T-cell (primary cell): ENCODE measurements at regions of chr3 and their contacts with region 1.

Region 1: DNA sequence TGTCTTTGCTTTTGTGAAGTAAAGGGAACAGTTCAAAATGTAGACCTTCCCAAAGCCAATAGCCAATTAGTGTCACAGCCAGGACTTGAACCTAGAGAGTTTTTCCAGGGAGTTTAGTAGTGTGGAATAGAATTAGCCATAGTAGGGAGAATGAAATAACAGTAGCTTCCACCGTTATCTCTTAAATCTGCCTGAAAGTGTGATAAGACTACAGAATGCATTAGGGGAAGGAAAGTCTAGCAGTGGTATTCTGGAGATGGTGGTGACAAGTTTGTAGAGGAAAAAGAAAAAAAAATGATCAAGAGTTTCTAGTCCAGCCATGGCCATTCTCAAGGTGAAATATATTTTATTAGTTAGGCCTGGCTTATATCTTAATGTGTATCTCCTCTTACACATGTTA is 13.8 kb downstream of the ATP11B start:
- DNase-seq: no peak
- ATAC-seq: no peak
- H3K4me3 ChIP-seq: no peak overlapping the region
- H3K4me3 Mint-ChIP-seq: peak overlapping the region in 1 of 3 donors; percentile 30
- H3K27ac ChIP-seq: no peak overlapping the region
- H3K27ac Mint-ChIP-seq: no peak overlapping the region
- H3K4me1 ChIP-seq: peaks cover 11 to 14% of the 10 kb centered on the region in 2 experiments
- H3K4me1 Mint-ChIP-seq: peaks cover 80 to 92% (median 84%) of the 10 kb centered on the region in 3 donors
- H3K27me3 ChIP-seq: no peaks in the 10 kb centered on the region
- H3K27me3 Mint-ChIP-seq: no peaks in the 10 kb centered on the region

Region 2: DNA sequence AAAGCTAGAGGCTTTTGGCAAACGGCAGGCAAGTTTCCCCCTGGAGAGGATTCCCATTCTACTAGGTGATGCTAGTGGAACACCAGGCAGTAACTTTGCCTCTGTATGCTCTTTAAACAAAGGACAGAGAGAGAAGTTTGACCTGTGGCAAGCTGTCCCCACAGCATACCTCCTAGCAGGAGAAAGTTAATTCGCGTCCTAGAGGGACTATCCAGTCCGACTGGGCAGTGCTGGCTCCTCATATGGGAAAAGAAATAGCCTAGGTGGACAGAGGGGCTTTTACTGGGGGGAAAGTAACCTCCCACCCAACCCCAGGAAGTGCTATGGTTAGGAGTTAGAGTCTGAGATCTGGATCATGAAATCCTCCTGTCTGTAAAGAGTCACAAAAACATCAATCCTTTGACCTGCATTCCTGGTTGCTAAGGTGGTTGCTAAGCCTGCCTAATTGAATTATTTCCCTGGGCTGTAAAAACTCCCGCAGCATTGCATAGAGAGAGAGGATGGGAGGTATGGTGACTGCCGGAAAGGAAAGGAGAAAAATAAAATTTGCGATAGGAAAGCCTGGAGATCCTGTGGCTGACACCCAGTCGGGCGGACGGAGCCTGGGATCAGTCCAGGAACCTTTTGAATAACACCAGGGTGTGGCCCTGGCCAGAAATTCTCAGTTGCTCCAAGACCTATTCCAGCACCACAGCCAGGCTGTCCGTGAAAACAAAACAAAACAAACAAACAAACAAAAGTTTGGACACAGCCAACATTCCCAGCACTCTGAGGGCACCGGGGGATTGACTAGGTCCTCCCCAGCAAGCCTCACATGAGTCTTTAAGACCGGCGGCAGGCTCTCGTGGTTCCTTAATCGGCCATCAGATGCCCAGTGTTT is 81.4 kb before region 1 on chr3:
- CTCF ChIA-PET with region 1: no interaction called
- POLR2A ChIA-PET with region 1: no interaction called
- DNase-seq: peak in 1 of 35 experiments; percentile 9
- ATAC-seq: no peak
- H3K4me3 ChIP-seq: no peak overlapping the region
- H3K4me3 Mint-ChIP-seq: no peak overlapping the region
- H3K27ac ChIP-seq: no peak overlapping the region
- H3K27ac Mint-ChIP-seq: no peak overlapping the region
- H3K4me1 ChIP-seq: no peaks in the 10 kb centered on the region
- H3K4me1 Mint-ChIP-seq: no peaks in the 10 kb centered on the region
- H3K27me3 ChIP-seq: peaks cover 0 to 24% of the 10 kb centered on the region in 2 experiments
- H3K27me3 Mint-ChIP-seq: peaks cover 11 to 16% of the 10 kb centered on the region in 2 donors

Region 3: GRCh38 chr3:182818296-182818978 is 11.4 kb after region 1 on chr3:
- CTCF ChIA-PET with region 1: interaction called in 1 of 2 experiments, 6 read pairs
- POLR2A ChIA-PET with region 1: interaction called in 1 of 2 experiments, 15 read pairs
- DNase-seq: no peak
- ATAC-seq: no peak
- H3K4me3 ChIP-seq: no peak overlapping the region
- H3K4me3 Mint-ChIP-seq: no peak overlapping the region
- H3K27ac ChIP-seq: no peak overlapping the region
- H3K27ac Mint-ChIP-seq: no peak overlapping the region
- H3K4me1 ChIP-seq: peaks cover 4 to 6% of the 10 kb centered on the region in 2 experiments
- H3K4me1 Mint-ChIP-seq: peaks cover 45 to 60% (median 57%) of the 10 kb centered on the region in 3 donors
- H3K27me3 ChIP-seq: no peaks in the 10 kb centered on the region
- H3K27me3 Mint-ChIP-seq: no peaks in the 10 kb centered on the region